Stomach (tissue), 19 donors: ENCODE measurements at regions of chr7 and their contacts with region 1.

Region 1: GRCh38 chr7:1225441-1226185 is 7.1 kb upstream of the UNCX start:
- DNase-seq: peak in 1 of 2 donors; percentile 62
- H3K4me3 ChIP-seq: no peak overlapping the region
- H3K27ac ChIP-seq: no peak overlapping the region
- H3K4me1 ChIP-seq: peaks cover 9 to 37% (median 30%) of the 10 kb centered on the region in 4 donors
- H3K27me3 ChIP-seq: peaks cover 45 to 100% (median 94%) of the 10 kb centered on the region in 3 donors
- CTCF ChIP-seq: peak in 5 of 7 experiments; percentile 22 to 80 (median 65)
- EP300 ChIP-seq: no peak
- POLR2A ChIP-seq: no peak

Region 2: GRCh38 chr7:1412322-1413261 is 187.0 kb after region 1 on chr7:
- intact Hi-C with region 1: loop called (anchors 10 kb)
- DNase-seq: peak; percentile 93
- H3K4me3 ChIP-seq: peak overlapping the region in 1 of 4 donors; percentile 32
- H3K27ac ChIP-seq: no peak overlapping the region
- H3K4me1 ChIP-seq: peaks cover 0 to 12% (median 10%) of the 10 kb centered on the region in 4 donors
- H3K27me3 ChIP-seq: peaks cover 4 to 88% (median 38%) of the 10 kb centered on the region in 3 donors
- CTCF ChIP-seq: peak in 5 of 7 experiments; percentile 24 to 82 (median 75)
- EP300 ChIP-seq: no peak
- POLR2A ChIP-seq: no peak

Region 3: GRCh38 chr7:1473864-1474512 is 248.4 kb after region 1 on chr7:
- intact Hi-C with region 1: loop called (anchors 10 kb)
- DNase-seq: peak; percentile 94 to 98
- H3K4me3 ChIP-seq: no peak overlapping the region
- H3K27ac ChIP-seq: peak overlapping the region in 2 of 5 donors; percentile 10 to 46
- H3K4me1 ChIP-seq: peaks cover 0 to 13% (median 11%) of the 10 kb centered on the region in 4 donors
- H3K27me3 ChIP-seq: no peaks in the 10 kb centered on the region
- CTCF ChIP-seq: peak in 5 of 7 experiments; percentile 75 to 95 (median 93)
- EP300 ChIP-seq: no peak
- POLR2A ChIP-seq: no peak